Mammary epithelial cell (primary cell): ENCODE measurements at regions of chr1 and their contacts with region 1.

Region 1: DNA sequence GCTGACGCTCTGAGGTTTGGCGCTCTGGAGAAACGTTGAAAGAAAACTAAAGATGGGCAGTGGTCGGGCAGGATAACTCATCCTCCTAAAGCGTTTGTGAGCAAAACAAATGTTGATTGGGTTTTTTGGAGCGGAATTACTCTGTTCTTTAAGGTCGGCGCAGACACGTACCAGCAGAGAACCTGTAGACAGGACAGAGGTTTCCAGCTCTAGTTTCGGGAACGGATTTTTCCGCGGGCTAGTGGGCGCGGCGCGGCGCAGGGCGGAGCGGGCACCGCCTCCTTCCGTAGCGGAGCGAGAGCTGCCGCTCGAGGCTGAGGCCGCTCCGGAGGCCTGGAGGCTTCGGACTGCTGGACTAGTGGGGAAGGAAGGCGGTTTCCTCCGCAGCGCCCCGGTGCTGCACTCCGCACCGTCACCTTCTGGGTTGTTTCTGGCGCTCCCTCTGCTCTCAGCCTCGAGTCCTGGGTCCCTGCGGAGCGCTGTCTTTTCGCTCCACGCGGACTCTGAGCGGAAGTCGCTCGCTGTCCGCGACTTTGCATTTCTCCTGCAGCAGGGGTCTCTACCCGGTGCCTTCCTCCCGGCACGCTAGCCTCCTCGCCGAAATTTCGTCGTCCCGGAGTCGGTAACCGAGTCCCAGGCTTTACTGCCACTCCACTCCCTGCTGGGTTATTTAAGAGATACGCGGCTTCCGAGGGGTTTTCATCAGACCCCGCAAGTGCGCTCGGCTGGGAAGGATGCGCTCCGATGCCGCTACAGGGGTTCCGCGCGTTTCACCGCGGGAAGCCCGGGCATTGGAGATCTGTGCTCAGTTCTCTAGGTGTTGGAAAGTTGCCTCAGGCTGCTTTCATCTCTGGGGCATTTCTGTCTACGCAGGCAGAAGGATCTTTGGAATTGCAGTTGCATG is 7.0 kb downstream of the FOXD2 start:
- DNase-seq: peak; percentile 34
- H3K4me3 ChIP-seq: no peak overlapping the region
- H3K27ac ChIP-seq: no peak overlapping the region
- H3K4me1 ChIP-seq: no peaks in the 10 kb centered on the region
- H3K27me3 ChIP-seq: peaks cover 42% of the 10 kb centered on the region
- CTCF ChIP-seq: no peak

Region 2: GRCh38 chr1:47351305-47351704 is 93.5 kb before region 1 on chr1:
- CTCF ChIA-PET with region 1: no interaction called
- dilution Hi-C with region 1: no loop called
- in situ Hi-C with region 1: no loop called
- intact Hi-C with region 1: no loop called
- DNase-seq: peak; percentile 52
- H3K4me3 ChIP-seq: no peak overlapping the region
- H3K27ac ChIP-seq: no peak overlapping the region
- H3K4me1 ChIP-seq: no peaks in the 10 kb centered on the region
- H3K27me3 ChIP-seq: no peaks in the 10 kb centered on the region
- CTCF ChIP-seq: no peak

Region 3: DNA sequence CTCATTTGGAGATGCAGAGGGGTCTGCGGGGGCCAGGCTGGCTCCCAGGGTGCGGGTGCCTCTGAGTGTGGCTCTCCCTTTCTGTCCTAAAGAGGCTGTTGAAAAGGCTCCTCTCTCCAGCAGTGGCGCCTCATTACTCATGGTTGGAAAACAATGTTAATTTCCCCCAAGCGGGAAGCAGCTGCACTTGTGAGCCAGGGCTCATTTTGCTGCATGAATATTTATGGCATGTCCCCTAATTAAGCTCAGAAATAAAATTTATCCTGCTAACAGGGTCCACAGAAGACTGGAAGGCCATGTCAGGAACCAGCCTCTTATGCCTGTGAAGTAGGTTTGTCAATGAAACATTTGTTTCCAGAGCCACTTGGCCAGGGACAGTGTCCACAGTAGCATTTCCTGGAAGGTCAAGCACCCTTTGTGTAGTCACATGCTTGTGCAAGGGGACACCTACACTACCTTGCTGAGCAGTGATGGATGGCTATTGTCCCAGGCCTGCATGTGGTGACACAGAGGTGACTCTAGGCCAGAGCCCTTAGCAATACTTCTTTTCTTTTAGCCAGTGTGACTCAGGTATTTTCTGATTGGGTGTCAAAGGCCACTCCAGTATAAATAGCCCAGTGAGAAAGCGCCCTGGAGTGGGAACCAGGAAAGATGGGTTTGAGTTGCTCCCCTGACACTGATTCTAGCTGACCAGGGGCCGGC is 252.1 kb after region 1 on chr1:
- CTCF ChIA-PET with region 1: no interaction called
- dilution Hi-C with region 1: loop called (anchors 5 kb)
- in situ Hi-C with region 1: no loop called
- intact Hi-C with region 1: no loop called
- DNase-seq: no peak
- H3K4me3 ChIP-seq: no peak overlapping the region
- H3K27ac ChIP-seq: no peak overlapping the region
- H3K4me1 ChIP-seq: no peaks in the 10 kb centered on the region
- H3K27me3 ChIP-seq: no peaks in the 10 kb centered on the region
- CTCF ChIP-seq: no peak

Region 4: GRCh38 chr1:48536477-48536876 is 1091.7 kb after region 1 on chr1:
- CTCF ChIA-PET with region 1: no interaction called
- dilution Hi-C with region 1: no loop called
- in situ Hi-C with region 1: no loop called
- intact Hi-C with region 1: no loop called
- DNase-seq: peak; percentile 46
- H3K4me3 ChIP-seq: no peak overlapping the region
- H3K27ac ChIP-seq: no peak overlapping the region
- H3K4me1 ChIP-seq: no peaks in the 10 kb centered on the region
- H3K27me3 ChIP-seq: no peaks in the 10 kb centered on the region
- CTCF ChIP-seq: no peak